GM13976 (cell line): ENCODE measurements at regions of chr21 and their contacts with region 1.

Region 1: DNA sequence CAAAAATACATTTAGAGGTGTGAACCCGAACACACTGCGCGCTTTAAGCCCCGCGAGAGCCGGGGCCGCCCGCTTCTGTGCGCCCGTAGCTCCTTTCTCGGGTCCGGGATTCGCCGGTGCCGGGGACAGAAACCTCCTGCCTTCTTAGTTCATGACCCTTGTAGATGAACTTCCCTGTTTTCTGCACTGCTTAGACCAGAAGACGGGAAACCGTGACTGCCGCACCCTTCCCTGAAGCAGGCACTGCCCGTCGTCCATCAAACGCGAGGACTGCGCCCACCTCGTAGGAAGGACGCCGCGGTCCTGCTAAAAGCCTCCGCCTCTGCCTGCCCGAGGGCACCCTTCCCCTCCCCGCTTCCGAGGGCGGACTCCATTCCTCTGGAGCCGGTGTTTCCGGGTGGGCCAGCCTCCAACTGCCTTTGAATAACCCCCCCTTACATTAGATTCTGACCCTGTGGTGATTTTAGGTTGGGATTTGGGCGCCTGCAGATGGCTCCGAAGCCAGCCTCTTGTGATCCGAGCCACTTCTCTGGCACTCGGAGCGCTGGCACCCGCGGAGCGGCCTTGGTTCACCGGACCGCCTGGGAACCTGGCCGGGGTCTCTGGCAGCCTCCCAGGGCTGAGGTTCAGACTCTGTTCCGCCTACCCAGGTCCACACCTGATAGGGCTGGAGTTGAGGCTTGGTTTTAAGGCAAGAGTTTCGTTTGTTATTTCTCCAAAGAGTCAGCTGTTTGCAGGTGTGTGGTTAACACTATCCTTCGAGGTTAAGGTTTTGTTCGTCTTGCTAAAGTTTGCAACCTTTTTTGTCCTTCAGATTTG is 1.2 kb upstream of the PTTG1IP start:
- DNase-seq: no peak
- CTCF ChIP-seq: no peak

Region 2: GRCh38 chr21:44920694-44921604 is 46.2 kb after region 1 on chr21 and contains the start of gene ITGB2:
- in situ Hi-C with region 1: loop called (anchors 5 kb)
- DNase-seq: peak; percentile 78
- CTCF ChIP-seq: no peak